ENCODE measurements at regions of chr22 and their contacts with region 1.

Region 1: DNA sequence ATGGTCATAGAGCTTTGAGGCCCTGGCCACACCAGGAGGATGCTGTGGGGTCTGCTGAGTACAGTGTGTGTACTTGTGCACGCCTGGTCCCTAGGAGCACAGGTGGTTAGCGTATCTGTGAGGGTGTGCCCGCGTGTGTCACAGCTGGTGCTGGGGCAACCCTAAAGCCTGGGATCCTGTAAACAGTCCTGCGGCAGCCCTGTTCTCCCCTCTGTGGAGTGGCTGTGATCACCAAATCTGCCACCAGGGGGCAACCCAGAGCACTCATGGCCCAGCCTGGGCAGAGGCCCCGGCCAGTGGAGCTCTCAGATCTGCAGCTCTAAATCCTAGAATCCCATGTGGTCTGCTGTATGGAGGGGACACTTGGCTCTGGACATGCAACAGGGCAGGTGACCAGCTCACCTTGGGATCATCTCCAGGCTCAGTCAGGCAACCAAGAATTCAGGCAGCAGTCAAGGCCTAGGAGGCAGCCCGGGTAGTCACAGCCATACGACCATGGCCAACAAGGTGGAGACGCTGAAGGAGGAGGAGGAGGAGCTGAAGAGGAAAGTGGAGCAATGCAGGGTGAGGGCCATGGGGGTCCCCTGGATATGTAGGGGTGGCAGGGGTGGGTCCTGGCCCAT is 3.9 kb downstream of the SH3BP1 start:
- DNase-seq: no peak
- ATAC-seq: peak; percentile 73
- H3K4me3 ChIP-seq: no peak overlapping the region
- H3K27ac ChIP-seq: no peak overlapping the region
- H3K4me1 ChIP-seq: peaks cover 34 to 60% of the 10 kb centered on the region in 2 experiments
- H3K27me3 ChIP-seq: no peaks in the 10 kb centered on the region
- CTCF ChIP-seq: peak; percentile 85 to 94 (median 93)
- POLR2A ChIP-seq: no peak
- RAD21 ChIP-seq: peak; percentile 81

Region 2: DNA sequence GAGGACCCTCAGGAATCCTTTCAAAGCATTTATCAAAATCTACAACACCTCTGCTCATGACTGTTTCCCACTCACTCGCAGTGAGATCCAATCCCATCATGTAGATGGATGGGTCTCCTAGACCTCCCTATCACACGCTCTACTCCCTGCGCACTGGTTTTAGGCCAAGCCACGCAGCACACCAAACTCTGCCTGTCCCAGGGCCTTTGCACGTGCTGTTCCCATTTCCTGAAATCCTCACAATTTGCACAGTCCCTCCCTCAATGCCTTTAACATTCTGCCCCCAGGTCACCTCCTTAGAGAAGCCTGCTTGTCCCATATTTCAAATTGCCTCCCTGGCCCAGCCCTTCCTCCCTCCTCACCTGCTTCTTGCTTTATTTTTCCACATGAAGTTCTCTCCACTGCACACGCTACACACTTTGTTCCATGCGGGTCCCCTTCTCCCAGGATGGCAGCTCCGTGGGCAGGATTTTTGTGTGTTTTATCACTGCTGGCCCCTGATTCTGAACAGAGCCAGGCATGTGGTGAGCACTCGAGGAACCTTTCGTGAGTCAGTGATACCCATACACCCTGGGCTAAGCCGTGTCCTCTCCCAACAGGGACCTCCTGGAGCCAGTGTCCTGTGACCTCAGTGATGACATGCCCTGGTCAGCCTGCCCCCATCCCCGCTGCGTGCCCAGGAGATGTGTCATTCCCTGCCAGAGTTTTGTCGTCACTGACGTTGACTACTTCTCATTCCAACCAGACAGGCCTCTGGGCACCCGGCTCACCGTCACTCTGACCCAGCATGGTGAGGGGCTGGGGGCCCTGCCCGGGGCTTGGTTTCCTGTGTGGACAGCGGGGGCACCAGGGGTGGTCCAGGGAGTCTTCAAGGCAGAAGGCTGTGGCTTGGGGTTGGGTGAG is 717.7 kb before region 1 on chr22:
- CTCF ChIA-PET with region 1: no interaction called
- POLR2A ChIA-PET with region 1: no interaction called
- RAD21 ChIA-PET with region 1: no interaction called
- intact Hi-C with region 1: no loop called
- DNase-seq: no peak
- ATAC-seq: no peak
- H3K4me3 ChIP-seq: no peak overlapping the region
- H3K27ac ChIP-seq: no peak overlapping the region
- H3K4me1 ChIP-seq: peaks cover 0 to 7% of the 10 kb centered on the region in 2 experiments; a peak in 2 of 4 replicates
- H3K27me3 ChIP-seq: no peaks in the 10 kb centered on the region
- CTCF ChIP-seq: no peak
- POLR2A ChIP-seq: no peak
- RAD21 ChIP-seq: no peak

Region 3: GRCh38 chr22:37658133-37659065 is 15.1 kb after region 1 on chr22 and contains the start of gene PDXP:
- CTCF ChIA-PET with region 1: interaction called, 38 read pairs
- POLR2A ChIA-PET with region 1: interaction called, 11 read pairs
- RAD21 ChIA-PET with region 1: interaction called in 1 of 2 experiments, 5 read pairs
- intact Hi-C with region 1: no loop called
- DNase-seq: peak; percentile 100
- ATAC-seq: peak; percentile 96
- H3K4me3 ChIP-seq: peak within 1 kb of the TSS; percentile 86 to 93
- H3K27ac ChIP-seq: peak within 1 kb of the TSS; percentile 86
- H3K4me1 ChIP-seq: peaks cover 11 to 30% of the 10 kb centered on the region in 2 experiments; a peak in 3 of 4 replicates
- H3K27me3 ChIP-seq: no peaks in the 10 kb centered on the region
- CTCF ChIP-seq: no peak
- POLR2A ChIP-seq: peak; percentile 77
- RAD21 ChIP-seq: no peak
- total RNA-seq, gene PDXP: 42.7 TPM

Measured in HCT116 (cell line).